ENCODE measurements at regions of chr2 and their contacts with region 1.

Region 1: GRCh38 chr2:149017116-149017985 is 21.1 kb upstream of the LYPD6B start:
- DNase-seq: peak; percentile 85 to 86
- ATAC-seq: peak; percentile 71
- H3K4me3 ChIP-seq: no peak overlapping the region
- H3K27ac ChIP-seq: no peak overlapping the region
- H3K4me1 ChIP-seq: no peaks in the 10 kb centered on the region
- H3K27me3 ChIP-seq: no peaks in the 10 kb centered on the region

Region 2: DNA sequence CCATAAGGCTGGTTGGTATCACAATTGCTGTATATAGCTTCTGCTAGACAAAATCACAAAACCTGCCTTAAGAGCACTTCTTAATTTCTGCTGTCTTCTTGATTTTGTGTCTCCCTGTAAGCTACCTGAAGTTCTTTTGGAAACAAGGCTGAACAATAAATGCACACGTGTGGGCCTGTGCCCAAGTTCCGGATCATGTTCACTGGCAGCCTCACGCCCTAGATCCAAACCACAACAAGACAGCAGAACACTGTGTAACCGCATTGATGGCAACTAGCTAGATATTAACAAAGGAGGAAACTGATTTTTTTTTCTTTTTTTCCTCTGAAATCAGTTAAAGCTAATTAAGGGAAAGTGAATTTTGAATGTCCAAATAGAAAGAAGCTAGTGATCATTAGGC is 60.3 kb before region 1 on chr2:
- intact Hi-C with region 1: no loop called
- DNase-seq: no peak
- ATAC-seq: no peak
- H3K4me3 ChIP-seq: no peak overlapping the region
- H3K27ac ChIP-seq: no peak overlapping the region
- H3K4me1 ChIP-seq: no peaks in the 10 kb centered on the region
- H3K27me3 ChIP-seq: peaks cover 0 to 1% of the 10 kb centered on the region in 2 donors

Region 3: DNA sequence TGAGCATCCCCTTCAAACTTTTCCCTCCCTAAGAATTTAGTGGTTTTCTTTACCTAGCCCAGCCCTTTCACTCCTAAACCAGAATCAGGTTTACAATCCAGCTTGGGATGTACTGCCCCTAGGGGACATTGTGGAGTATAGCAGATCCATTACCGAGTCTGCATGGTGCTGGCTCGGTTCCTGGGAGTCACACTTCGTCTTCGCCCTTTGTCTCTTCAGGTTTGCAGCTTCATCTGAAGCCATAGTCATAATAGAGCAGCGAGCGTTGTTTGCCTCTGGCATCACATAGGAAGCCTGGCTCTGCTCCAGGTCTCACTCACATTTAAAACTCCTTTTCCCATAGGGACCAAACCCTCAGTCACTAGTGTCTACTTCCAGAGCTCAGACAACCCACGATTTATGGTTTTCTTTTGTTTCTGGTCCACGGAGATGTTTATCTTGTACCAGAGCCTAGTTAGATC is 296.2 kb after region 1 on chr2:
- intact Hi-C with region 1: loop called in 1 of 2 experiments (anchors 2 kb)
- DNase-seq: no peak
- ATAC-seq: no peak
- H3K4me3 ChIP-seq: no peak overlapping the region
- H3K27ac ChIP-seq: no peak overlapping the region
- H3K4me1 ChIP-seq: no peaks in the 10 kb centered on the region
- H3K27me3 ChIP-seq: no peaks in the 10 kb centered on the region

Region 4: GRCh38 chr2:149561309-149561926 is 544.1 kb after region 1 on chr2:
- intact Hi-C with region 1: loop called (anchors 1 to 2 kb)
- DNase-seq: no peak
- ATAC-seq: no peak
- H3K4me3 ChIP-seq: no peak overlapping the region
- H3K27ac ChIP-seq: no peak overlapping the region
- H3K4me1 ChIP-seq: peaks cover 0 to 3% of the 10 kb centered on the region in 2 donors
- H3K27me3 ChIP-seq: no peaks in the 10 kb centered on the region

Measured in aorta (tissue), 5 donors.